Colonic mucosa (tissue), 4 donors: ENCODE measurements at regions of chr22 and their contacts with region 1.

Region 1: DNA sequence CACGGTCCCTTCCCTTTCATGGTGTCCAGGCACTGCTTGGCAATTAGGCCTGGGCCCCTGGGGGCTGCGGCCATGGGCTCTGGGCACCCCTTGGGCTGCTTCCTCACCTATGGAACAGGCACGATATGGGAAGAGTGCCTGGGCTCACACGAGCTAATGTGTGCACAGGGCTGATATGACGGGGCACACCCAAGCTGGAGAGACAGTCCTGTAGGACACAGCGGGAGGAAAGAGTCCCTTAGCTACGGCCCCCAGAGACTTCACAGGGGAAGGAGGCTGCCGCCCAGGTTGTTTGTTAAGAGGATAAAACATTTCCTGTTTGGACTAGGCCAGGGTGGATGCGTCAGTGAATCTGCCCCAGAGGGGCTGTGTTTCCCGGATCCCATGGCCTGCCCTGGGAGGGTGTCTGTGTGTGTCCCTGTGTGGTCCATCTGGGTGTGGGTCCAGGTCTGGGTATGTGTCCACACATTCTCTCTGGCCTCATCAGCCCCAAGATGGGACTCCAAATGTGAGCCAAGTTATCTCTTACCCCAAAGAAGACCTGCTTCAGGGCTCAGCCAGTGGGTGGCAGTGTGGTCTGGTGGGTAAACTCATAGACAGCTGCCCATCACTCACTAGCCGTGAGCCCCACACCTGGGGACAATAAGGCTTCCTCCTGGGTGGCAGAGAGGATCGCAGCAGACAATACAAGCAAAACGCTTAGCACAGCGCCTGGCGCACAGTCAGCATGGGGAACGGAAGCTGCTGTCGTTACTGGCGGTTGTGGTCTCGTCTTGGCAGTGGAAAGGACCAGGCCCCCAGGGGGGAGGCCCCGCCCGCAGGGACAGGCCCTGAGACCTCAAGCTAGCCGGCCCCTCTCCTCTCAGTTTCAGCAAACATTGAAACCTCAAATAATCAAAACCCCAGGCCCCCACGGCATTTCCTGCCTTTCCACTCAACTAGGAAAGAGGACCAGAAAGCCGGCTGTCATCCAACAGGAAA is 3.2 kb upstream of the EMID1 start:
- DNase-seq: peak; percentile 58
- H3K4me3 ChIP-seq: no peak overlapping the region
- H3K27ac ChIP-seq: peak overlapping the region; percentile 54
- H3K4me1 ChIP-seq: no peaks in the 10 kb centered on the region
- H3K27me3 ChIP-seq: peaks cover 16% of the 10 kb centered on the region
- CTCF ChIP-seq: no peak

Region 2: GRCh38 chr22:28943501-28943879 is 259.0 kb before region 1 on chr22:
- intact Hi-C with region 1: no loop called
- DNase-seq: no peak
- H3K4me3 ChIP-seq: no peak overlapping the region
- H3K27ac ChIP-seq: no peak overlapping the region
- H3K4me1 ChIP-seq: no peaks in the 10 kb centered on the region
- H3K27me3 ChIP-seq: no peaks in the 10 kb centered on the region
- CTCF ChIP-seq: no peak

Region 3: DNA sequence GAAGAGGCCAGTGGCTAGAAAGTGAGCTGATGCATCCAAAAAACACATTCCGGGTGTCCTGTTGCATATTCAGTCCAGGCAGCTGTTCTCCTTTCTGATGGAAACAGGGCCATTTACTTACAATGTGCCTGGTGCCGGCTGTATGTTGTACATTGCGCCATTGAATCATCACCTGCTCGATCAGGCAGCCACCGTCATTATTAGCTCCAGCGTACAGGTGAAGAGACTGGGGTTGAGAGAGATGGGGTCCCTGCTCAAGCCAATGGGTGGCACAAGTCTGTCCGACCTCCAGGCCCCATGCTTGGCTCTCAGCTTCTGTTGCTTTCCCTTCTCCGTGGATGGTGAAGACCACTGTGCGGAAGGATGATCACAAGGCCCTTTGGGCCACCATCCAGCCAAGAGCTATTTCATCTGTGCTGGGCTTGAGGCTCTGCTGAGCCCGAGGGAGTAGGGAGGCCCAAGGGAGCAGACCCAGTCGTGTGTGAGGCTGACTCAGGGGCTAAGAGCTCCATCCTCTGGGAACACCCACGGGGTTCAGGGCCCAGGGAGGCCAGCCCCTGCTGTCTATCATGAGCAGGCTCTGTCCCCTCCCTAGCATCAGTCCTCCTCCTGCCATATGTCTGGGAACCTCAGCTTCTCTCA is 17.5 kb before region 1 on chr22:
- intact Hi-C with region 1: no loop called
- DNase-seq: no peak
- H3K4me3 ChIP-seq: no peak overlapping the region
- H3K27ac ChIP-seq: no peak overlapping the region
- H3K4me1 ChIP-seq: no peaks in the 10 kb centered on the region
- H3K27me3 ChIP-seq: no peaks in the 10 kb centered on the region
- CTCF ChIP-seq: no peak

Region 4: DNA sequence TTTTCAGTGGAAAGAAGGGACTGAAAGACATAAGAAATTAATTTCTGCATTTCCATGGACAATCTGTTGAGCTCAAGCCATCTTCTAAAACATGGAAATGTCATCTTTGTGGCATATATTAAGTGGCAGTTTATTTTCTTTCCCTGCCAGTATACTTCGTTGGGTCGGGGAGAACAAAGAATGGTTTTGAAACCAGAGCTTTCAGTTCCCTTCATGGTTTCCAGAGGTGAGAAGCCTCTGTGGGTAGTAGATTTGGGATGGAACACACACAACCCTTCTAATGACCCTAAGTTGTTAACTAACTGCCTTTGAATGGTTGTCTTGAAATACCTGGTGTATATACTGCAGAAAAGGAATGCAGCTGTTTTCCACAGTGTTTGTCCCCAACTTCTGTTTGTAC is 86.3 kb after region 1 on chr22:
- intact Hi-C with region 1: no loop called
- DNase-seq: no peak
- H3K4me3 ChIP-seq: no peak overlapping the region
- H3K27ac ChIP-seq: no peak overlapping the region
- H3K4me1 ChIP-seq: no peaks in the 10 kb centered on the region
- H3K27me3 ChIP-seq: no peaks in the 10 kb centered on the region
- CTCF ChIP-seq: no peak

Region 5: DNA sequence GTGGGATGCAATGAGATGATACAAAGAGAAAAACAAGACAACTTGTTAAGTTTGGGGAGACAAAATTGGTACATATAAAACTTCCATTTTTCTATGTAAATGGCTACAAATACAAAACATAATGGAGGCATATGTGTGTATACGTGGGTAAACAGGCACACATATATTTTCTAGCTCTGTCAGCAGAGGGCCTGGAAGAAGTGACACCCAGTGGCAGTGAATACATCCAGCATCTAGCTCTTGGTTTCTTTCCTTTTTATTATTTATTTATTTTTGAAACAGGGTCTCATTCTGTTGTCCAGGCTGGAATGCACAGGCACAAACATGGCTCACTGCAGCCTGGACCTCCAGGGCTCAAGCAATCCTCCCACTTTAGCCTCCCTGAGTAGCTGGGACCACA is 118.0 kb after region 1 on chr22:
- intact Hi-C with region 1: loop called (anchors 5 kb)
- DNase-seq: no peak
- H3K4me3 ChIP-seq: no peak overlapping the region
- H3K27ac ChIP-seq: no peak overlapping the region
- H3K4me1 ChIP-seq: peaks cover 4% of the 10 kb centered on the region
- H3K27me3 ChIP-seq: peaks cover 12% of the 10 kb centered on the region
- CTCF ChIP-seq: no peak